Activated T-helper 1 cell treated with anti-CD3 and anti-CD28 coated beads, Interleukin-12 subunit alpha, Interleukin-12 subunit beta, Interleukin-2, Interleukin-4 antibody, amounts not matched to agents 30 ng/mL and 10 ng/mL and 1 ng/mL, durations not matched to agents 14 hours and 24 hours and 36 hours (primary cell): ENCODE measurements at regions of chr15 and their contacts with region 1.

Region 1: GRCh38 chr15:75578948-75579920 is at the start of gene PTPN9:
- DNase-seq: peak; percentile 57
- H3K4me3 Mint-ChIP-seq: peak within 1 kb of the TSS; percentile 95
- H3K27ac Mint-ChIP-seq: peak within 1 kb of the TSS; percentile 91
- H3K4me1 Mint-ChIP-seq: peaks cover 23% of the 10 kb centered on the region
- H3K27me3 Mint-ChIP-seq: no peaks in the 10 kb centered on the region
- total RNA-seq, gene PTPN9: 28.0 and 31.7 TPM in 2 replicates

Region 2: GRCh38 chr15:75517233-75517632 is 62.0 kb before region 1 on chr15:
- intact Hi-C with region 1: loop called (anchors 10 kb)
- DNase-seq: no peak
- H3K4me3 Mint-ChIP-seq: no peak overlapping the region
- H3K27ac Mint-ChIP-seq: no peak overlapping the region
- H3K4me1 Mint-ChIP-seq: no peaks in the 10 kb centered on the region
- H3K27me3 Mint-ChIP-seq: no peaks in the 10 kb centered on the region

Region 3: GRCh38 chr15:75625542-75626347 is 46.5 kb after region 1 on chr15 and contains the start of gene SNUPN:
- intact Hi-C with region 1: loop called (anchors 1 kb)
- DNase-seq: peak; percentile 90
- H3K4me3 Mint-ChIP-seq: peak within 1 kb of the TSS; percentile 94
- H3K27ac Mint-ChIP-seq: peak within 1 kb of the TSS; percentile 100
- H3K4me1 Mint-ChIP-seq: peaks cover 38% of the 10 kb centered on the region
- H3K27me3 Mint-ChIP-seq: no peaks in the 10 kb centered on the region
- total RNA-seq, gene SNUPN: 30.8 and 34.1 TPM in 2 replicates

Region 4: DNA sequence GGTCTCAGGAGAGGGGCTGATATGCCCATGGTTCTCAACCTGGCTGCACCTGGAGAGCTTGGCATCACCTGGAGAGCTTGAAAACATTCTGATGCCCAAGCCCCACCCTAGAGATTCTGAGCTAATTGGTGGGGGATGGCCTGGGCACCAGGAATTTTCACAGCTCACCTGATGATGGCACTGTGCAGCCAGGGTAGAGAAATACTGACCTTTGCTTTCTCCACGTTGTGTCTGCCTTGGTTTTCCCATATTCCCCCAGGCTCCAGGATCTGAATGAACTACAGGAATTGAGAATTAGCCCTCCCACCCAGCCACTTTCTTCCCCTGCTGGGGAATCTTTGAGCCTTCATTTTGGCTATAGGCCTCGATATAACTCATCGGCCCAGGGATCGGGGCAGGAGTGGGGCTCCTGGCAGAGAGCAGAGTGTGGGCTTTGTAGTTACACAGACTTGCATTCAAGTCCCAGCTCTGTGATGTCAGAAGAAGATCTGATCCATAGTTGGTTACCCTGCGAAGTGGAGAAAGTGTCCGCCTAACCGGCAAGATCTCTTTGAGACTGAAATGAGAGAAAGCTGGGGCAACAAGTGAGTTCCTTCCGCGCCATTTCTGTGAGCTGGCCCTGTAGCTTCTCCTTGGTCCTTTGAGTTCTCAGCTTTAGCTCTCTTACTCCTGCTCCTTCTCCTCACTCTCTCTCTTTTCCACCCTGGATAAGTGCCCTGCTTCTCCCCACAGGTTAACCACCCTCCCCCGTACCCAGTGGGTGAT is 230.9 kb after region 1 on chr15:
- intact Hi-C with region 1: loop called (anchors 5 kb)
- DNase-seq: no peak
- H3K4me3 Mint-ChIP-seq: no peak overlapping the region
- H3K27ac Mint-ChIP-seq: no peak overlapping the region
- H3K4me1 Mint-ChIP-seq: no peaks in the 10 kb centered on the region
- H3K27me3 Mint-ChIP-seq: peaks cover 13% of the 10 kb centered on the region

Region 5: GRCh38 chr15:76529911-76530310 is 950.7 kb after region 1 on chr15:
- intact Hi-C with region 1: no loop called
- DNase-seq: no peak
- H3K4me3 Mint-ChIP-seq: no peak overlapping the region
- H3K27ac Mint-ChIP-seq: no peak overlapping the region
- H3K4me1 Mint-ChIP-seq: no peaks in the 10 kb centered on the region
- H3K27me3 Mint-ChIP-seq: no peaks in the 10 kb centered on the region